WTC11 (cell line): ENCODE measurements at regions of chr11 and their contacts with region 1.

Region 1: DNA sequence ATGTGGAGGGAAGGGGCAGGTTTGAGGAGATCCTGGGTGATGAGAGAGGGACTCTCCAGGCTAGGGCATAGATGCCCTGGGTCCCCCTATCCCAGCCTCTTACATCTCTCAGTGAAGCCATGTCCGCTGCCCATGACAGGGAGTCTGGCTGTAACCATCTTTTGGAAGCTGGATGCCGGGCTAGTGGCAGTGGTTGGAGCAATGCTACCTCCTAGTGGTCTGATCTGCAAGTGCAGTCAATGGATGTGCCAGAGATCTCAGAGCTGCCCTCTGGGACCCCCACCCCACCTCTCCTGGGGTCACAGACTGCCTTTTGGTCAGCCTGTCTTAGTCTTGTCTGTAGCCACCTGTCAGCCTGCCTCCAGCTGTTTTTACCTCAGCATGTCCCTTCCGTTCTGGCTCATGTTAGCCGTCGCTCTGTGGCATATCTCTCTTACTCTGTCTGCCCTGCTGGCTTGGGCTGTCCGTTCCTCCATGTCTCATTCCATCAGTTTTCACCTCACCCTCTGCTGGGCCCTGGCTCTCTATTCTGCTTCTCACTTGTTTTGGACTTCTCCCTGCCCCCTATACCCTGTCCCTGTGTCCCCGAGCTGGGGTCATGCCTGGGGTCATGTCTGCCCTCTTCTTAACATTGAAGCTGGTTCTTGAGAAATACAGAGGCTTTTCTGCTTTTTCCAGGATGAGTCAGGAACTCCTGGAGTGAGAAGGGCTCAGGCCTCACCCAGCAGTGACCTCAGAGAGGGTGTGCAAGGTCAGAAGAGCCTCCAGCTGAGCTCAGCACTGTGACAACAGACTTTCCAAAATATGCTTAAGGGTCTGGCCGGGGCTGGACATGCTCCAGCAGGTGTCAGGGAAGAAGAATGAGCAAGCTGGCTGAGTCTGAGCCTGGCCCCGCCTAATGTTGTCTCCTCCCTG is 52.0 kb upstream of the THY1 start:
- DNase-seq: peak; percentile 87
- ATAC-seq: peak; percentile 86
- H3K4me3 Mint-ChIP-seq: no peak overlapping the region
- H3K27ac Mint-ChIP-seq: no peak overlapping the region
- H3K4me1 Mint-ChIP-seq: peaks cover 39% of the 10 kb centered on the region
- H3K27me3 Mint-ChIP-seq: peaks cover 5% of the 10 kb centered on the region; the same call in 1 of the 2 replicates
- CTCF ChIP-seq: peak; percentile 95

Region 2: DNA sequence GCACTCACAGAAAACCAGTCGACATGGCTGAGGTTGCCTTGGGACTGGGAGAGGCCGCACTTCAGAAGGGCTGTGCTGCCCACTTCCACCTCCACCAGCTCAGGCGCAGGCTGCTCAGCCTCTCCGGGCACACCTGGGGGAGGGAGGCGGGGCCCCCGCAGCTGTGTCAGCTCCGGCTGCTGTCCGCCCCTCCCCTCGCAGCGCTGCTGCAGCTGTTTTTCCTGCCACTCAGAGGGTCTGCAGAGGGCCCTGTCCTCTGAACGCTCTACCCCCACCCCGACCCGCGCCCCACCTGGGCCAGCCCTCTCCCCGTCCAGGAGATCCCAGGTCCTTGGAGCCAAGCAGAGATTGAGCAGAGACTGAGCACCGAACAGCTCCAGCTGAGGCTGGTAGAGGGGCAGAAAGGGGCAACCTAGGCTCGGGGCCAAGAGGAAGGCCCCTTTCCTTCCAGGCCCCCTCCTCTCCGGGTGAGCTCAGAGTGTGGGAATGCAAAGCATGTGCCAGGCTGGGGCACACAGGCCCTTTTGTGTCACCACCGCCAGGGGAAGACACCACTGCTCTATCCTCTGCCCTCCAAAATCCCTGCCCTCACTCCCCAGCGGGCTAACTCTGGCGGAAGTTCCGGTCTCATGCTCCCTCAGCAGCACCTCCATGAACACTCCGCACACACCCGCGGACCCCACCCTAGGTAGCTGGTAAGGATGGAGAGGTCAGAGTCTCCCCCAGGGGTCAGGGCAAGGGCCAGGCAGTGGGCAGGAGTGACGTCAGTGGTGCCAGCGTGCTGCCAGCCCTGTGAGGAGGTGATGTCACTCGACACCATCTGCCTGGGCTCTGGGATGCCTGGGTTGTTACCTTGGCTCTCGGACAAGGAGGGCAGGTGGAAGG is 159.6 kb before region 1 on chr11:
- CTCF ChIA-PET with region 1: interaction called, 12 read pairs
- POLR2A ChIA-PET with region 1: no interaction called
- DNase-seq: peak; percentile 74
- ATAC-seq: peak; percentile 29
- H3K4me3 Mint-ChIP-seq: peak overlapping the region; percentile 69
- H3K27ac Mint-ChIP-seq: no peak overlapping the region
- H3K4me1 Mint-ChIP-seq: peaks cover 37% of the 10 kb centered on the region
- H3K27me3 Mint-ChIP-seq: peaks cover 44% of the 10 kb centered on the region
- CTCF ChIP-seq: no peak

Region 3: DNA sequence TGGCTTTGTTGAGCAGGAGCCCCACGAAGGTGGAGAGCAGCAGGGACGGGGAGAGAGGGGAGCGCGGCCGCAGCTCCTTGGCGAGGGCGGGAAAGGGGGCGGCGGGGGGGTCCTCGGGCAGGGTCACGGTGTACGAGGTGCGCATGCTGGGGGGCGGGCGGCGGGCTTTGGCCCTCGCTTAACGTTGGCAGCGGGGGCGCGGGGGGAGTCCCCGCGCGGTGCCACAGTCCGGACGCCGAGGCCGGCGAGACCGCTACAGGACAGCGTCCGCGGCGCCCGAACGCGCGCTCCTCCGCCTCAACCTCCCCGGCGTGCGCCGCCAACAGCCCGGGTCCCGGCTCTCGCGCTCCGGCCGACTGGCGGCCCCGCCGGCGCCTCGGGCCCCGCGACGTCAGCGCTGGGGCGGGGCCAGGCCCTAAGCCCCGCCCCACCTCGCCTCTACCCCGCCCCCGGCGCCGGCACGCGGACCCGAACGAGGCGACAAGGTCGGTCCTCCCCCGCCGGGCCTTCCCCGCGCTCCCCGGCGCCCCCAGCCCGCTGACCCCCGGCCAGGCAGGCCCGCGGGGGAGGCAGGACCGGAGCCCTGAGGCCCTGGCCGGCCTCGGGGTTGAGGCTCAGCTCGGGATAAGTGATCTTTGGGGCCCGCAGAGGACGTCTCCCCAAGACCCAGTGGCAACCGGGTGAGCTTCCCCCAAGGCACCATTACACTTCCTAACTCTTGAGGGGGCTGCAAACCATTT is 110.9 kb before region 1 on chr11:
- CTCF ChIA-PET with region 1: interaction called, 23 read pairs
- POLR2A ChIA-PET with region 1: interaction called, 3 read pairs
- DNase-seq: peak; percentile 68
- ATAC-seq: peak; percentile 72
- H3K4me3 Mint-ChIP-seq: peak overlapping the region; percentile 69
- H3K27ac Mint-ChIP-seq: no peak overlapping the region
- H3K4me1 Mint-ChIP-seq: peaks cover 50% of the 10 kb centered on the region
- H3K27me3 Mint-ChIP-seq: peaks cover 49% of the 10 kb centered on the region
- CTCF ChIP-seq: no peak

Region 4: GRCh38 chr11:119381181-119381988 is 93.6 kb before region 1 on chr11 and contains the start of gene USP2:
- CTCF ChIA-PET with region 1: interaction called, 68 read pairs
- POLR2A ChIA-PET with region 1: no interaction called
- DNase-seq: peak; percentile 98
- ATAC-seq: peak; percentile 83
- H3K4me3 Mint-ChIP-seq: no peak within 1 kb of the TSS
- H3K27ac Mint-ChIP-seq: peak within 1 kb of the TSS; percentile 12; the same call in 1 of the 2 replicates
- H3K4me1 Mint-ChIP-seq: peaks cover 40% of the 10 kb centered on the region
- H3K27me3 Mint-ChIP-seq: peaks cover 20% of the 10 kb centered on the region
- CTCF ChIP-seq: peak; percentile 24; the same call in 1 of the 2 replicates
- total RNA-seq, gene USP2: 7.3 to 8.2 TPM (median 8.0 TPM) in 3 replicates

Region 5: GRCh38 chr11:119421941-119422808 is 52.8 kb before region 1 on chr11:
- CTCF ChIA-PET with region 1: interaction called, 43 read pairs
- POLR2A ChIA-PET with region 1: interaction called, 3 read pairs
- DNase-seq: peak; percentile 53
- ATAC-seq: peak; percentile 12
- H3K4me3 Mint-ChIP-seq: peak overlapping the region; percentile 96
- H3K27ac Mint-ChIP-seq: peak overlapping the region; percentile 92
- H3K4me1 Mint-ChIP-seq: peaks cover 81% of the 10 kb centered on the region
- H3K27me3 Mint-ChIP-seq: no peaks in the 10 kb centered on the region
- CTCF ChIP-seq: no peak

Region 6: DNA sequence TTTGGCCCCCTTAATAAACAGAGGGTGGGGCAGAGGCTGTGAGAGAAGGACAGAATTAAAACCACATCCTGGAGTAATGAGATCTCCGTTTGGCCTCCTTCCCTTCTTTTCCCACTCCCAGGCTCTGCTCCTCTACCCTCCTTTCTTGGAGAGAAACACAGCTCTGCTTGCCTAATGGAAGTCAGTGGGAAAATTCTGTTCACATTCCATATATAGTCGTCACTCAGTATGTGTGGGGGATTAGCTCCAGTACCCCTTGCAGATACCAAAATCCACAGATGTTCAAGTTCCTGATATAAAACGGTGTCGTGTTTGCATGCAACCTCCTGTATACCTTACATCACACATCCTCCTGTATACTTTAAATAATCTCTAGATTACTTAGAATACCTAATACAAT is 14.4 kb before region 1 on chr11:
- CTCF ChIA-PET with region 1: interaction called, 17 read pairs
- POLR2A ChIA-PET with region 1: no interaction called
- DNase-seq: no peak
- ATAC-seq: no peak
- H3K4me3 Mint-ChIP-seq: no peak overlapping the region
- H3K27ac Mint-ChIP-seq: no peak overlapping the region
- H3K4me1 Mint-ChIP-seq: peaks cover 38% of the 10 kb centered on the region
- H3K27me3 Mint-ChIP-seq: no peaks in the 10 kb centered on the region; the same call in 1 of the 2 replicates
- CTCF ChIP-seq: no peak

Region 7: GRCh38 chr11:119752345-119752871 is 277.5 kb after region 1 on chr11:
- CTCF ChIA-PET with region 1: no interaction called
- POLR2A ChIA-PET with region 1: no interaction called
- DNase-seq: no peak
- ATAC-seq: no peak
- H3K4me3 Mint-ChIP-seq: no peak overlapping the region
- H3K27ac Mint-ChIP-seq: no peak overlapping the region
- H3K4me1 Mint-ChIP-seq: peaks cover 15% of the 10 kb centered on the region
- H3K27me3 Mint-ChIP-seq: peaks cover 3% of the 10 kb centered on the region; the same call in 1 of the 2 replicates
- CTCF ChIP-seq: no peak